ENCODE measurements at regions of chr6 and their contacts with region 1.

Region 1: GRCh38 chr6:80280262-80281010 is 174.0 kb downstream of the BCKDHB start:
- DNase-seq: no peak
- ATAC-seq: peak; percentile 87
- H3K4me3 ChIP-seq: no peak overlapping the region
- H3K27ac ChIP-seq: no peak overlapping the region
- H3K4me1 ChIP-seq: peaks cover 3% of the 10 kb centered on the region; the same call in 1 of the 2 replicates
- H3K27me3 ChIP-seq: no peaks in the 10 kb centered on the region
- CTCF ChIP-seq: no peak
- EP300 ChIP-seq: no peak
- POLR2A ChIP-seq: no peak
- RAD21 ChIP-seq: no peak

Region 2: GRCh38 chr6:80254716-80255115 is 25.7 kb before region 1 on chr6:
- CTCF ChIA-PET with region 1: no interaction called
- POLR2A ChIA-PET with region 1: no interaction called
- RAD21 ChIA-PET with region 1: interaction called, 3 read pairs
- SMC1A ChIA-PET with region 1: no interaction called
- in situ Hi-C with region 1: no loop called
- intact Hi-C with region 1: loop called (anchors 2 kb)
- DNase-seq: no peak
- ATAC-seq: no peak
- H3K4me3 ChIP-seq: no peak overlapping the region
- H3K27ac ChIP-seq: no peak overlapping the region
- H3K4me1 ChIP-seq: no peaks in the 10 kb centered on the region
- H3K27me3 ChIP-seq: no peaks in the 10 kb centered on the region
- CTCF ChIP-seq: no peak
- EP300 ChIP-seq: no peak
- POLR2A ChIP-seq: no peak
- RAD21 ChIP-seq: no peak

Region 3: GRCh38 chr6:80832337-80832736 is 551.9 kb after region 1 on chr6:
- CTCF ChIA-PET with region 1: no interaction called
- POLR2A ChIA-PET with region 1: no interaction called
- RAD21 ChIA-PET with region 1: no interaction called
- SMC1A ChIA-PET with region 1: no interaction called
- in situ Hi-C with region 1: no loop called
- intact Hi-C with region 1: no loop called
- DNase-seq: no peak
- ATAC-seq: no peak
- H3K4me3 ChIP-seq: no peak overlapping the region
- H3K27ac ChIP-seq: no peak overlapping the region
- H3K4me1 ChIP-seq: no peaks in the 10 kb centered on the region
- H3K27me3 ChIP-seq: no peaks in the 10 kb centered on the region
- CTCF ChIP-seq: no peak
- EP300 ChIP-seq: no peak
- POLR2A ChIP-seq: no peak
- RAD21 ChIP-seq: no peak